Natural killer cell (primary cell): ENCODE measurements at regions of chr18 and their contacts with region 1.

Region 1: DNA sequence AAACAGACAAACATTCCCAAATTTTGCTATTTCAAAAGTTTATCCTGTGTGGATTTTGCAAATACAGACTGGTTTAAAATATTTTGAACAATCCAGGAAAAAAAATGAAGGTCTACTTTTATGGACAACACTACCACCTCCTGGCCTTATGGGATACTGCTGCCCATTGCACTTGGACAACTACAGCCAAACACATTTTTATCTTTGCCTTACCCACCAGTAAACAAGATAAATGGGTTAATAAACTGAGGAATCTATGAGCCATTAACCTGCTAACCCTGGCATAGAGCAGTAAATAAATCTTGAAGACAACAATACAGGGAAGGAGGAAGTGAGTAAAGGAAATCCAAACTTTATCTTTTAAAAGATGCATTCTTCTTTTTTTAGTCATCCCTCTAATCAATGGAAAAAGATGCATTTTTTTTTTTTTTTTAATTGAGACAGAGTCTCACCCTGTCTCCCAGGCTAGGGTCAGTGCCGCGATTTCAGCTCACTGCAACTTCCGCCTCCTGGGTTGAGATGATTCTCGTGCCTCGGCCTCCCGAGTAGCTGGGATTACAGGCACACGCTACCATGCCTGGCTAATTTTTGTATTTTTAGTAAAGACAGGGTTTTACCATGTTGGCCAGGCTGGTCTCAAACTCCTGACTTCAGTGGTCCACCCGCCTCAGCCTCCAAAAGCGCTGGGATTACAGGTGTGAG is 2.1 kb upstream of the SPIRE1 start:
- DNase-seq: peak in 1 of 2 donors; percentile 72
- ATAC-seq: peak; percentile 30 to 46 (median 38)
- H3K4me3 ChIP-seq: no peak overlapping the region
- H3K4me3 Mint-ChIP-seq: peak overlapping the region; percentile 55
- H3K27ac ChIP-seq: no peak overlapping the region
- H3K27ac Mint-ChIP-seq: no peak overlapping the region
- H3K4me1 ChIP-seq: peaks cover 7% of the 10 kb centered on the region
- H3K4me1 Mint-ChIP-seq: peaks cover 11 to 12% of the 10 kb centered on the region in 2 donors
- H3K27me3 ChIP-seq: no peaks in the 10 kb centered on the region
- H3K27me3 Mint-ChIP-seq: no peaks in the 10 kb centered on the region
- CTCF ChIP-seq: peak; percentile 69

Region 2: DNA sequence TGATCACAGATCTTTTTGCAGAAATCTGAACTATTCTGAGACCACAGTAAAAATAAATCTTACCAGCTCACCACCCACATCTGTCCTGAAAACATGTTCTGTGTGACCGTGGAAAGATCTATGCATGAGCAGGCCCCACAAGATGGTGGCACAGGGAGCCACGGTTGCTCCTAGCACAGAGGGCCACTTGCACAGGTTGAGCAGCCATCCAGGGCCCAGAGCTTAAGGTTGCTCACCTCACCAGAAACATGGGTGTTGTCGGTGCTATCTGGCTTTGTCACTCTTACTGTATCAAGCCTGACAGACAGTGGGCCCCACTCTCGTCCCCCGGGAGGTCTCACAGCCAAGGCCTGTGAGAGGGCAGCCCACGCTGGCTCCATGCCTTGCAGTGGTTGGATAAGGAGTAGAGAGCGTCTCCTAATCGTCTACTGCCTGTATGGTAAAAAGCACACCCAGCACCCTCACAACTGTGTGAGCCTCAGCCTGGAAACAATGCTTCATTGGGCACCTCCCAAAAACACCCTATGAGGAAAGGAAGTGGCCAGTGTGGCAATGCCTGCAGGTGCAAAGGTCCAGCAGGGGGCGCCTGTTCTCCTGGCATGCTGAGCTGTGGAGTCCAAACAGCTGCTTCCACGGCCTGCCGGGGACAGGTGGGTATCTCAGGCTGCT is 332.4 kb before region 1 on chr18:
- intact Hi-C with region 1: loop called (anchors 1 kb)
- DNase-seq: peak; percentile 64 to 76
- ATAC-seq: peak; percentile 75 to 92 (median 80)
- H3K4me3 ChIP-seq: no peak overlapping the region
- H3K4me3 Mint-ChIP-seq: no peak overlapping the region
- H3K27ac ChIP-seq: no peak overlapping the region
- H3K27ac Mint-ChIP-seq: peak overlapping the region; percentile 38 to 63
- H3K4me1 ChIP-seq: peaks cover 7% of the 10 kb centered on the region
- H3K4me1 Mint-ChIP-seq: peaks cover 14 to 16% of the 10 kb centered on the region in 2 donors
- H3K27me3 ChIP-seq: no peaks in the 10 kb centered on the region
- H3K27me3 Mint-ChIP-seq: no peaks in the 10 kb centered on the region
- CTCF ChIP-seq: peak; percentile 58

Region 3: GRCh38 chr18:12391618-12392165 is 268.4 kb before region 1 on chr18:
- intact Hi-C with region 1: loop called (anchors 1 kb)
- DNase-seq: peak; percentile 29 to 78
- ATAC-seq: peak; percentile 79 to 96 (median 89)
- H3K4me3 ChIP-seq: no peak overlapping the region
- H3K4me3 Mint-ChIP-seq: no peak overlapping the region
- H3K27ac ChIP-seq: no peak overlapping the region
- H3K27ac Mint-ChIP-seq: no peak overlapping the region
- H3K4me1 ChIP-seq: no peaks in the 10 kb centered on the region
- H3K4me1 Mint-ChIP-seq: no peaks in the 10 kb centered on the region
- H3K27me3 ChIP-seq: peaks cover 2% of the 10 kb centered on the region
- H3K27me3 Mint-ChIP-seq: peaks cover 7 to 10% of the 10 kb centered on the region in 2 donors
- CTCF ChIP-seq: peak; percentile 71

Region 4: GRCh38 chr18:12491611-12492435 is 168.2 kb before region 1 on chr18:
- intact Hi-C with region 1: no loop called
- DNase-seq: no peak
- ATAC-seq: no peak
- H3K4me3 ChIP-seq: no peak overlapping the region
- H3K4me3 Mint-ChIP-seq: no peak overlapping the region
- H3K27ac ChIP-seq: no peak overlapping the region
- H3K27ac Mint-ChIP-seq: no peak overlapping the region
- H3K4me1 ChIP-seq: no peaks in the 10 kb centered on the region
- H3K4me1 Mint-ChIP-seq: no peaks in the 10 kb centered on the region
- H3K27me3 ChIP-seq: no peaks in the 10 kb centered on the region
- H3K27me3 Mint-ChIP-seq: no peaks in the 10 kb centered on the region
- CTCF ChIP-seq: no peak

Region 5: GRCh38 chr18:12520442-12520992 is 139.5 kb before region 1 on chr18:
- intact Hi-C with region 1: no loop called
- DNase-seq: no peak
- ATAC-seq: no peak
- H3K4me3 ChIP-seq: no peak overlapping the region
- H3K4me3 Mint-ChIP-seq: no peak overlapping the region
- H3K27ac ChIP-seq: no peak overlapping the region
- H3K27ac Mint-ChIP-seq: no peak overlapping the region
- H3K4me1 ChIP-seq: no peaks in the 10 kb centered on the region
- H3K4me1 Mint-ChIP-seq: no peaks in the 10 kb centered on the region
- H3K27me3 ChIP-seq: no peaks in the 10 kb centered on the region
- H3K27me3 Mint-ChIP-seq: no peaks in the 10 kb centered on the region
- CTCF ChIP-seq: no peak